ENCODE measurements at regions of chr17 and their contacts with region 1.

Region 1: DNA sequence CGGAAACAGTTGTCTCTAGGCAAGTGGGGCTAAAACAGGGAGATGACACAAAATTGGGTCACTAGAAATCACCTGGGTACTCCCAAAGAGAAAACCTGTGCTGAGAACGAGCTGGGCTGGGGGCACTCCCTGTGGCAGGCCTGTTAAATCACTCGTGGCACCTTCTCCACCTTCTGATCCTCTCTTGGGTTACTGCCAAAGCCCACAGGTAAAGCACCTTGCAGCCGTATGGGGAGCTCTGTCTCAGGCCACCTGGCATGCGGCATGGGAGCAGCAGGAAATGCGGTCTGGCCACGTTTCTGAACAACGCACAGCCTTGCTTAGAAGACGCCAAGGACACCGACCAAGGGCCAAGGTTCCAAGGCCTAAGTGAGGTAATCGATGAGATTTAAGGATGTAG is 21.5 kb upstream of the ICAM2 start:
- DNase-seq: no peak
- ATAC-seq: no peak
- H3K4me3 ChIP-seq: no peak overlapping the region
- H3K27ac ChIP-seq: no peak overlapping the region
- H3K4me1 ChIP-seq: no peaks in the 10 kb centered on the region
- H3K27me3 ChIP-seq: no peaks in the 10 kb centered on the region
- CTCF ChIP-seq: no peak
- EP300 ChIP-seq: no peak
- POLR2A ChIP-seq: no peak
- RAD21 ChIP-seq: no peak

Region 2: GRCh38 chr17:64056269-64057005 is 14.5 kb after region 1 on chr17:
- CTCF ChIA-PET with region 1: interaction called, 12 read pairs
- POLR2A ChIA-PET with region 1: no interaction called
- RAD21 ChIA-PET with region 1: no interaction called
- SMC1A ChIA-PET with region 1: interaction called, 4 read pairs
- in situ Hi-C with region 1: no loop called
- intact Hi-C with region 1: no loop called
- DNase-seq: peak; percentile 57
- ATAC-seq: peak; percentile 88
- H3K4me3 ChIP-seq: no peak overlapping the region
- H3K27ac ChIP-seq: peak overlapping the region; percentile 35
- H3K4me1 ChIP-seq: peaks cover 30% of the 10 kb centered on the region
- H3K27me3 ChIP-seq: no peaks in the 10 kb centered on the region
- CTCF ChIP-seq: peak in 1 of 3 experiments; percentile 13; a peak in 1 of 6 replicates
- EP300 ChIP-seq: peak in 1 of 2 experiments; percentile 43; a peak in 1 of 4 replicates
- POLR2A ChIP-seq: no peak
- RAD21 ChIP-seq: 0 out of 2 replicates have a peak, but pooled peaks have one; percentile 13

Region 3: DNA sequence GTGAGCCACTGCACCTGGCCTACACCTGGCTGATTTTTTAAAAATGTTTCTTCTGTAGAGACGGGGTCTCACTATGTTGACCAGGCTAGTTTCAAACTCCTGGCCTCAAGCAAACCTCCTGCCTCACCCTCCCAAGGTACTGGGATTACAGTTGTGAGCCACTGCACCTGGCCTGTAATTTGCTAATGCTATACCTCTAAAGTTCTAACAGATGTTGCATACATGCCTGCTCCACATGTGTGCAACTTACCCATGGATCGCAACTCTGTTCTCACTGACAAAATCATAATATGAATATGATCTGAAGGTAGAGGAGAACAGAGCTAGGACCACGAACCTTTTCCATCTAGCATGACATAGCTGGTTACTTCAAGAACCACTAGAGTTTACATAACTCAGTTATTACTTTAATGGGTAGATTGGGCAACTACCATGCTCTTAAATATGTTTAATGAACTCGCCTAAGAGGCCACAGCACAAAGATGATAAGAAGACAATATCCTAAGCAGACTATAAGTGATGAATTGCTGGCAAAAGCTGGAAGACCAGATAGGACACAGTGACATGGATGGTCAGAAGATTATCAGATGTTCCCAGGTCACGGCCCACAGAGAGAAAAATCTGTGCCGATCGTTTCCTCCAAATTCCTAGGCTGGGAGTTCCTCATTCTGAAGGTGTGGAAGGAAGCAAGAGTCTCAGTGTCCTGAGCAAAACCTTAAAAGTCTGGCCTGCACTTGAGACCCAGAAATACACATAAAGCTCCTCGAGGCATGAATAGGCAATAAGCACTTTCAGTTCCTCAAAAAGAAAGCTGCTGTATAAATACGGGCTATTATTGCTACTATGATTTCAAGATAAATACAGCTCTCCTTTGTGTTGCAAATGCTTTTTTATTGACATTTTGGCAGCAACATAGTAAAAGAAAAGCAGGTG is 32.1 kb after region 1 on chr17:
- CTCF ChIA-PET with region 1: no interaction called
- POLR2A ChIA-PET with region 1: no interaction called
- RAD21 ChIA-PET with region 1: no interaction called
- SMC1A ChIA-PET with region 1: no interaction called
- in situ Hi-C with region 1: no loop called
- intact Hi-C with region 1: no loop called
- DNase-seq: peak; percentile 62
- ATAC-seq: peak; percentile 96
- H3K4me3 ChIP-seq: peak overlapping the region; percentile 32; the same call in 1 of the 2 replicates
- H3K27ac ChIP-seq: peak overlapping the region; percentile 72
- H3K4me1 ChIP-seq: peaks cover 46% of the 10 kb centered on the region
- H3K27me3 ChIP-seq: no peaks in the 10 kb centered on the region
- CTCF ChIP-seq: no peak
- EP300 ChIP-seq: peak; percentile 66 to 91; a peak in 3 of 4 replicates
- POLR2A ChIP-seq: no peak
- RAD21 ChIP-seq: no peak; the same call in 1 of the 2 replicates

Region 4: DNA sequence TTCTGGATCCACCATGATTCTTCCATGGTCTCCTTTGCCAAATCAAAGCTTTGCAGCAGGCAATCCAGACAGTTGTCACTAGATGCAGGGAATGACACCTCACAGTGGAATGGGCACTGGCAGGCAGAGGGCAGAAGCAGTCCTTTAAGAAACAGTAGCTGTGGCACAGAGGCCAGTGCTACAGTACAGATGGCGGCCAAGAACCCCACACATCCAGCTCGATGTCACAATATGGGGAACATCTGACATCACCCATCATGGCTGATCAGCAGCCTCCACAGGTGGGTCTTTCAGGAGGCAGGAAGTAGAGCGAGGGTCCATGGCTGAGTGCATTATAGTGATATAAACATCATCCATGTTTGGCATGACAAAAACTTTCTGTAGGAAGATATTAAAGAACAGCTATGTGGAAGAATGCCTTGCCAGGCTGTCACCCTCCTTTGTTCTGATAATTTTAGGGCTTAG is 106.8 kb after region 1 on chr17:
- CTCF ChIA-PET with region 1: no interaction called
- POLR2A ChIA-PET with region 1: no interaction called
- RAD21 ChIA-PET with region 1: no interaction called
- SMC1A ChIA-PET with region 1: no interaction called
- in situ Hi-C with region 1: no loop called
- intact Hi-C with region 1: no loop called
- DNase-seq: no peak
- ATAC-seq: no peak
- H3K4me3 ChIP-seq: no peak overlapping the region
- H3K27ac ChIP-seq: no peak overlapping the region
- H3K4me1 ChIP-seq: peaks cover 3% of the 10 kb centered on the region; the same call in 1 of the 2 replicates
- H3K27me3 ChIP-seq: no peaks in the 10 kb centered on the region
- CTCF ChIP-seq: peak in 1 of 3 experiments; percentile 36; a peak in 2 of 6 replicates
- EP300 ChIP-seq: no peak
- POLR2A ChIP-seq: no peak
- RAD21 ChIP-seq: peak; percentile 18; the same call in 1 of the 2 replicates